ENCODE measurements at regions of chr19 and their contacts with region 1.

Region 1: DNA sequence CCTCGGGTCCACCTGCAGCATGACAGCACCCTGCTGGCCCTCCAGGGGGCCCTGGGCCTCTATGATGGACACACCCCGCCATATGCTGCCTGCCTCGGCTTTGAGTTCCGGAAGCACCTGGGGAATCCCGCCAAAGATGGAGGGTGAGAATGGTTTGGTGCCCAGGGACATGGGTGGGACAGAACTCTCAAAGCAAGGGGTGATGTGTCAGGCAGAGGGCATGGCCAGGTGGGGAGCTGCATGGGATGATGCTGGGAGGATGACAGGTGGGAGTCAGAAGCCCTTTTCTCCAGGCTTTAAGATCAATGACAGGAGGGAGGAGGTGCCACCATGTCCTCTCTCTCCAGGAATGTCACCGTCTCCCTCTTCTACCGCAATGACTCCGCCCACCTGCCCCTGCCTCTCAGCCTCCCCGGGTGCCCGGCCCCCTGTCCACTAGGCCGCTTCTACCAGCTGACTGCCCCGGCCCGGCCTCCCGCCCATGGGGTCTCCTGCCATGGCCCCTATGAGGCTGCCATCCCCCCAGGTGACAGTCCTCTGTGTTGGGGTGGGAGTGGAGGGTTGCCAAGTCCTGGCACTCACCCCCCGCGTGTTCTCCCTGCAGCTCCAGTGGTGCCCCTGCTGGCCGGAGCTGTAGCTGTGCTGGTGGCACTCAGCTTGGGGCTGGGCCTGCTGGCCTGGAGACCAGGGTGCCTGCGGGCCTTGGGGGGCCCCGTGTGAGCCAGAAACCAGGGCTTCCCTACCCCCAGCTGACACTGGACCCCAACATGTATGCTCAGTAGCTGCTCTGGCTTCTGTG is 4.4 kb downstream of the ACP4 start:
- DNase-seq: no peak
- ATAC-seq: peak; percentile 13
- H3K4me3 ChIP-seq: no peak overlapping the region
- H3K27ac ChIP-seq: no peak overlapping the region
- H3K4me1 ChIP-seq: peaks cover 24% of the 10 kb centered on the region
- H3K27me3 ChIP-seq: no peaks in the 10 kb centered on the region; a peak in 1 of 5 replicates
- CTCF ChIP-seq: peak; percentile 18; the same call in 1 of the 2 replicates
- EP300 ChIP-seq: no peak
- POLR2A ChIP-seq: peak; percentile 27 to 54; a peak in 1 of 4 replicates
- RAD21 ChIP-seq: no peak

Region 2: GRCh38 chr19:50357178-50358100 is 437.2 kb before region 1 on chr19:
- CTCF ChIA-PET with region 1: no interaction called
- POLR2A ChIA-PET with region 1: no interaction called
- in situ Hi-C with region 1: loop called (anchors 25 kb)
- intact Hi-C with region 1: no loop called
- DNase-seq: peak; percentile 52
- ATAC-seq: peak; percentile 81
- H3K4me3 ChIP-seq: peak overlapping the region; percentile 39 to 72 (median 56); a peak in 5 of 6 replicates
- H3K27ac ChIP-seq: no peak overlapping the region
- H3K4me1 ChIP-seq: peaks cover 11% of the 10 kb centered on the region; the same call in 1 of the 2 replicates
- H3K27me3 ChIP-seq: no peaks in the 10 kb centered on the region
- CTCF ChIP-seq: peak; percentile 91
- EP300 ChIP-seq: no peak
- POLR2A ChIP-seq: no peak
- RAD21 ChIP-seq: peak; percentile 82

Region 3: DNA sequence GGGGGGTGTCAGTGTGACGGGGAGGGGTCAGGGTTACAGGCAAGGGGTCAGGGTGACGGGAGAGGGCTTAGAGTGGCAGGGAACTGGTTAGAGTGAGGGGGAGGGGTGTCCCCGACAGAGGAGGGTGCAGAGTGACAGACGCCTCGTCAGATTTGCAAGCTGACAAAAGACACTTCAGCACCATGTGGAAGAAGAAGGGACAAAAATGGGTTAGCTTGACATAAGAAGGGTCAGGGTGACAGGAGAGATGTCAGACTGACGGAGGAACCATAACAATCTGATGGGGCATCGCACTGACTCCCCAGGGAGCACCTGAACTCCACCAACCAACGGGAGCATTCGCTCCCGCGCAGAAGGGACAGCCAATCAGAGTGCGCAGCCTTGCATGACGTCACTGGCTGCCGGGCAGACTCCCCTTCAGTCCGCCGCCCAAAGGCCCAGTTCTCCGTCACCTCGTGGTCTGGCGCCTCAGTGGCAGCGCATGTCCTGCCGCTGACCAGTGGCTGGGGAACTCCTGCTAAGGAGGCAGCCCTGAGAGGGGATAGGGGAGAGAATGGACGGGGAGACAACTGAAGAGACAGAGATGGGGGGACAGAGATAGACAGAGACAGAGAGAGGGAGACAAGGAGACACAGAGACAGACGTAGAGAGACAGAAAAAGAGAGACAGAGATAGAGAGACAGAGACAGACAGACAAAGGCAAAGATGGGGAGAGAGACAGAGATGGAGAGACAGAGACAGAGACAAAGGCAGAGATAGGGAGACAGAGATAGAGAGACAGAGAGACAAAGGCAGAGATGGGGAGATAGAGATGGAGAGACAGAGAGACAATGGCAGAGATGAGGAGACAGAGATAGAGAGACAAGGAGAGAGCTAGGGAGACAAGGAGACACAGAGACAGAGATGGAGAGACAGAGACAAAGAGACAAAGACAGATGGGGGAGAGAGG is 115.2 kb before region 1 on chr19:
- CTCF ChIA-PET with region 1: no interaction called
- POLR2A ChIA-PET with region 1: no interaction called
- in situ Hi-C with region 1: no loop called
- intact Hi-C with region 1: no loop called
- DNase-seq: peak; percentile 48
- ATAC-seq: peak; percentile 88
- H3K4me3 ChIP-seq: no peak overlapping the region
- H3K27ac ChIP-seq: no peak overlapping the region
- H3K4me1 ChIP-seq: no peaks in the 10 kb centered on the region
- H3K27me3 ChIP-seq: peaks cover 2 to 12% of the 10 kb centered on the region in 2 experiments; a peak in 3 of 5 replicates
- CTCF ChIP-seq: no peak
- EP300 ChIP-seq: no peak
- POLR2A ChIP-seq: no peak
- RAD21 ChIP-seq: no peak

Region 4: DNA sequence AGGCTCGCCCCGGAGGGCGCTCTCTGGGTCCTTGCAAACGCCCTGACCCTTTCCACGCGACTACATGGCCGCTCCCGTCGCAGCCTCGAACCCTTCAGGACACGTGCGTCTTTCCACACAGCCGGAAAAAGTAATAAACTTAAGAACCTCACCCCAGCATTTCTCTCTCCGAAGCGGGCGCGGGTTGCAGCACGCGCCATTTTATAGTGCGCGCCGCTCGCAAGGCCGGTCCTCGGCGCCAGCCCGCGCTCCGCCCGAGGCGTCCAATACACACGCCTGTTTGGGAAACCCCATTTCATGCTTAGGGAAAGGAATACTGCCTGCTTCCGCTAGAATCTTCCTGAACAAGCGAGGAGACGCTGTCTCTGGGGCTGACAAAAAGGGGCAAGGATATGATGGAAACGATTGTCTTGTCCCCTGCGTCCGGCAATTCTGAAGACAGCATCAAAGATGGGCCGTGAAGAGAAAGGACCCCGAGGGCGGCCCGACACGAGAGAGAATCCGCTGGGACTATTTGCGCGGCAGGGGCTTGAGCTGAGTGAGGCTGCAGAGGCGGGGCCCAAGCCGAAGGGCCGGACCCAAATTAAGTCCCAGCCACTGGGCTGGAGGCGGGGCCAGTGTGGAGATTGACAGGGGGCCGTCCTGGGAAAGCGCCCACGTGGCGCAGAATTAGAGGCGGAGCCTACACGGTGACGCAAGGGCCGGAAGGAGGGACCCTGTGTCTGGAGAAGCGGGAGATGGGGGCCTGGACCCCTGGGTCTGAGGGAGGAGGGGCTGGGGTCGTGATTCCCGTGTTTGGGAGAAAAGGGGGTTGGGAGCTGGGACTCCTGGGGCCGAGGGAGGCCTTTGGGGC is 10.0 kb after region 1 on chr19:
- CTCF ChIA-PET with region 1: no interaction called
- POLR2A ChIA-PET with region 1: interaction called, 27 read pairs
- in situ Hi-C with region 1: no loop called
- intact Hi-C with region 1: no loop called
- DNase-seq: peak; percentile 96
- ATAC-seq: peak; percentile 95
- H3K4me3 ChIP-seq: peak overlapping the region; percentile 92 to 94 (median 93)
- H3K27ac ChIP-seq: peak overlapping the region; percentile 99
- H3K4me1 ChIP-seq: peaks cover 31% of the 10 kb centered on the region
- H3K27me3 ChIP-seq: no peaks in the 10 kb centered on the region; a peak in 1 of 5 replicates
- CTCF ChIP-seq: no peak
- EP300 ChIP-seq: peak in 1 of 2 experiments; percentile 12; a peak in 2 of 4 replicates
- POLR2A ChIP-seq: peak; percentile 87 to 99
- RAD21 ChIP-seq: 0 out of 2 replicates have a peak, but pooled peaks have one; percentile 12

Measured in HepG2 (cell line).